Right ventricle myocardium inferior (tissue), 1 donor: ENCODE measurements at regions of chr13 and their contacts with region 1.

Region 1: DNA sequence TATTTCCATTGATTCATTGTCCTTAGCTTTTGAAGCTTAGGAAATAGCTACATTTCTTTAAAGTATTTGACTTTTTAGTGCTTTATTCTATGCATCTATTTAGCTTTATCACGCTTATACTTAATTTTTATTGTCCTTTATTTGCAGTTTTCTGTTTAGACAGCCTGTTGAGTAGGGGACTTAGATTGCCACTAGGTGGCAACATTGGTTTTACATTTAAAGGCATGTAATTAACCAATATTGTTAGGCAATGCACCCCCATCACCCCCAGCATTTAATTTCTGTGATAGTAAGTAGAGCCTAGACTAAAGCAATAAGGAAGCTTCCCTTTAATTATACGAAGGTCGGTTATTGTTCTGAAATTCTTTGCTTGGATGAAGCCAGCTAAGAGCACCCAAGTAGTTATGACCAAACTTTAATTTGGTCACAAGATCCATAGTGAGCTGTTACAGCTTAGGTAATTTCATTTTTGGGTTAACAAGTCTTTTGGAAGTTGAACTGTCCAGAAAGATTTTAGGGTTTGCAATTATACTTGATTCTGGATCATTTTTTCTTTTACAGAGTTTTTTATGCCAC is 36.5 kb downstream of the B3GLCT start:
- DNase-seq: no peak
- ATAC-seq: no peak

Region 2: GRCh38 chr13:31424117-31424729 is 187.9 kb after region 1 on chr13:
- intact Hi-C with region 1: loop called (anchors 2 kb)
- DNase-seq: peak; percentile 81
- ATAC-seq: peak; percentile 94